Activated T-helper 1 cell treated with anti-CD3 and anti-CD28 coated beads, Interleukin-12 subunit alpha, Interleukin-12 subunit beta, Interleukin-2, Interleukin-4 antibody, amounts not matched to agents 30 ng/mL and 10 ng/mL and 1 ng/mL, durations not matched to agents 14 hours and 24 hours and 36 hours (primary cell): ENCODE measurements at regions of chr14 and their contacts with region 1.

Region 1: GRCh38 chr14:54175298-54175942 is 218.8 kb upstream of the BMP4 start:
- DNase-seq: peak; percentile 17
- H3K4me3 Mint-ChIP-seq: no peak overlapping the region
- H3K27ac Mint-ChIP-seq: no peak overlapping the region
- H3K4me1 Mint-ChIP-seq: no peaks in the 10 kb centered on the region
- H3K27me3 Mint-ChIP-seq: peaks cover 23% of the 10 kb centered on the region

Region 2: GRCh38 chr14:53432378-53432802 is 743.0 kb before region 1 on chr14:
- intact Hi-C with region 1: loop called (anchors 5 kb)
- DNase-seq: no peak
- H3K4me3 Mint-ChIP-seq: no peak overlapping the region
- H3K27ac Mint-ChIP-seq: no peak overlapping the region
- H3K4me1 Mint-ChIP-seq: no peaks in the 10 kb centered on the region
- H3K27me3 Mint-ChIP-seq: peaks cover 3% of the 10 kb centered on the region

Region 3: GRCh38 chr14:53929871-53930715 is 245.3 kb before region 1 on chr14:
- intact Hi-C with region 1: loop called (anchors 2 kb)
- DNase-seq: no peak
- H3K4me3 Mint-ChIP-seq: no peak overlapping the region
- H3K27ac Mint-ChIP-seq: no peak overlapping the region
- H3K4me1 Mint-ChIP-seq: no peaks in the 10 kb centered on the region
- H3K27me3 Mint-ChIP-seq: no peaks in the 10 kb centered on the region

Region 4: GRCh38 chr14:54085232-54085761 is 90.1 kb before region 1 on chr14:
- intact Hi-C with region 1: no loop called
- DNase-seq: no peak
- H3K4me3 Mint-ChIP-seq: no peak overlapping the region
- H3K27ac Mint-ChIP-seq: no peak overlapping the region
- H3K4me1 Mint-ChIP-seq: no peaks in the 10 kb centered on the region
- H3K27me3 Mint-ChIP-seq: no peaks in the 10 kb centered on the region

Region 5: DNA sequence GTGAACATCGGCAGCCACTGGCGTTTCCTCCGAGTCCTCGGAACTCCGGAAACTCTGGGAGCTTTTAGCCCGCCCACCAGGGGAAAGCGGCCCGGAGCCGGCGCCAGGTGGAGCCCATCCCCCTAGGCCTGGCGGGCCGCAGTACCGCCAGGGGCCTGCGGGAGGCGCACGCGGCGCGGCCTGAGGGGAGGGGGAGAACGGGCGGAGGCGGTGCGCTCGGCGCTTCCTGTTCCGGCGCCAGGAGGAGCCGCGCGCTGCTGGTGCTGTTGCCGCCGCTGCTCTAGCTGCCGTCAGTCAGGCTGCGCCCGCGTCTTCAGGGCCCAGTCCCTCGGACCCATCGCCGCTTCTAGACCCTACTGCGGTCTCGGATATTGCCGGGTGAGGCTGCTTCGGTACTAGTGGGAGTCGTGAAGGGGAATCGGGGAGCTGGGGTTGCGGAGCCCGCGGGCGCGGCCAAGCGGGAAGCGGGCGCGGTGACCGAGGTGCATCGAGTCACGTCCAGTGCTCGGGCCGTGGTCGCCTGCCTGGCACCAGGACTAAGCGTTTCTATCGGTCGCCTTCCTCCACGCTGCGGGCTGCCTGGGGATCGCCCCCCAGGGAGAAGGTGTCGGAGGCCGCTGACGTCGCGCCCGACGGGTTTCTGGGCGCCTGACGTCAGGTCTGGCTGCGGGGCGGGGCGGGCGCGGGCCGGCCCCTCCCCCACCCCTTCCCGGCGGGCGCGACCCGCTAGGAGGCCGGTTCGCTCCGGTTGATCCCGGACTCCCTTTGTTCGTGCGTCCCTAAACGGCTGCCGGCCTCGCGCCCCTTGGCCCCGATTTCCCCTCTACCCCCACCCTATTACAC is 876.2 kb after region 1 on chr14 and contains the start of gene MAPK1IP1L:
- intact Hi-C with region 1: no loop called
- DNase-seq: peak; percentile 90
- H3K4me3 Mint-ChIP-seq: peak within 1 kb of the TSS; percentile 94
- H3K27ac Mint-ChIP-seq: peak within 1 kb of the TSS; percentile 95
- H3K4me1 Mint-ChIP-seq: peaks cover 37% of the 10 kb centered on the region
- H3K27me3 Mint-ChIP-seq: no peaks in the 10 kb centered on the region
- total RNA-seq, gene MAPK1IP1L: 139 and 141 TPM in 2 replicates